GM12878 (cell line): ENCODE measurements at regions of chr5 and their contacts with region 1.

Region 1: GRCh38 chr5:148730943-148731861 is 76.9 kb upstream of the HTR4 start:
- DNase-seq: peak; percentile 43
- ATAC-seq: peak; percentile 92
- H3K4me3 ChIP-seq: peak overlapping the region; percentile 47; the same call in 1 of the 2 replicates
- H3K27ac ChIP-seq: no peak overlapping the region
- H3K4me1 ChIP-seq: peaks cover 3% of the 10 kb centered on the region; the same call in 1 of the 2 replicates
- H3K27me3 ChIP-seq: no peaks in the 10 kb centered on the region; a peak in 1 of 4 replicates
- CTCF ChIP-seq: peak; percentile 83 to 99 (median 98); a peak in 5 of 6 replicates
- EP300 ChIP-seq: no peak
- POLR2A ChIP-seq: no peak
- RAD21 ChIP-seq: peak; percentile 83

Region 2: DNA sequence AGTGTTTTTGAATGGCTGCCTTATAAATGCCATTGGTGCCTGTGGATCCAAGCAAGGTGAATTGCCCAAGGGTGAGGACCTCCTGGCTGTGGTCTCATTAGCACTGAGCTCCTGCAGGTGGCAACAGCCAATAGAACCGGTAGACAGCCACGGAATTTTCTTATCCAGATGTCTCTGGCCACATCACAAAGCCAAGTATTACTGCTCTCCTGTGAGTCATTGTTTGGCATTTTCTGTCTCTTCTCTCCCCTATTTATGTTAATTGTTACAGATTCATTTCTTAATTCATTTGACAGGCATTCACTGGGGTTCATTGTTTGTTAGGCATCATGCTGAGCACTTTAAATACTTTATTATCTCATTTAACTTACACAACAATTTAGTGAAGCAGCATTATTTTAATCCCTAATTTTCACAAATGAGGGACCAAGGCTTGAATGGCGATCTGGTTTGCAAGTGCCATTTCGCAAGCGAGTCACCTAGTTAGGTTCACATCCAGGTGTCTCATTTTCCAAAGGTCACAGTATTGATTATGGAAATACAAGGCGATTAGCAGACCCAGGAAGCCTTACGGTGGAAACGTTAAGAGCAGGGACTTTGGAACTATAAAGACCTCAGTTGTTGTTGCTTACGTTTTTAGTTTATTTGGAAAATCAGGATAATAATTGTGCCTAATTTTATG is 1163.1 kb before region 1 on chr5:
- CTCF ChIA-PET with region 1: no interaction called
- POLR2A ChIA-PET with region 1: no interaction called
- RAD21 ChIA-PET with region 1: no interaction called
- SMC1A ChIA-PET with region 1: no interaction called
- in situ Hi-C with region 1: no loop called
- intact Hi-C with region 1: no loop called
- DNase-seq: no peak
- ATAC-seq: no peak
- H3K4me3 ChIP-seq: no peak overlapping the region
- H3K27ac ChIP-seq: no peak overlapping the region
- H3K4me1 ChIP-seq: no peaks in the 10 kb centered on the region
- H3K27me3 ChIP-seq: peaks cover 0 to 3% of the 10 kb centered on the region in 2 experiments; a peak in 2 of 4 replicates
- CTCF ChIP-seq: no peak
- EP300 ChIP-seq: no peak
- POLR2A ChIP-seq: no peak
- RAD21 ChIP-seq: no peak

Region 3: GRCh38 chr5:147949711-147950573 is 781.3 kb before region 1 on chr5:
- CTCF ChIA-PET with region 1: interaction called, 6 read pairs
- POLR2A ChIA-PET with region 1: no interaction called
- RAD21 ChIA-PET with region 1: interaction called, 3 read pairs
- SMC1A ChIA-PET with region 1: interaction called, 6 read pairs
- in situ Hi-C with region 1: no loop called
- intact Hi-C with region 1: loop called (anchors 1 kb)
- DNase-seq: no peak
- ATAC-seq: peak; percentile 77
- H3K4me3 ChIP-seq: no peak overlapping the region
- H3K27ac ChIP-seq: no peak overlapping the region
- H3K4me1 ChIP-seq: no peaks in the 10 kb centered on the region
- H3K27me3 ChIP-seq: no peaks in the 10 kb centered on the region
- CTCF ChIP-seq: peak; percentile 48 to 66 (median 48); a peak in 4 of 6 replicates
- EP300 ChIP-seq: no peak
- POLR2A ChIP-seq: no peak
- RAD21 ChIP-seq: peak; percentile 68

Region 4: GRCh38 chr5:148443998-148444397 is 287.2 kb before region 1 on chr5:
- CTCF ChIA-PET with region 1: interaction called, 137 read pairs
- POLR2A ChIA-PET with region 1: no interaction called
- RAD21 ChIA-PET with region 1: interaction called, 55 read pairs
- SMC1A ChIA-PET with region 1: interaction called, 50 read pairs
- in situ Hi-C with region 1: loop called (anchors 5 kb)
- intact Hi-C with region 1: loop called (anchors 1 kb)
- DNase-seq: peak; percentile 3
- ATAC-seq: peak; percentile 96
- H3K4me3 ChIP-seq: no peak overlapping the region
- H3K27ac ChIP-seq: no peak overlapping the region
- H3K4me1 ChIP-seq: no peaks in the 10 kb centered on the region
- H3K27me3 ChIP-seq: no peaks in the 10 kb centered on the region
- CTCF ChIP-seq: peak; percentile 63 to 73 (median 69)
- EP300 ChIP-seq: no peak
- POLR2A ChIP-seq: no peak
- RAD21 ChIP-seq: peak; percentile 78

Region 5: DNA sequence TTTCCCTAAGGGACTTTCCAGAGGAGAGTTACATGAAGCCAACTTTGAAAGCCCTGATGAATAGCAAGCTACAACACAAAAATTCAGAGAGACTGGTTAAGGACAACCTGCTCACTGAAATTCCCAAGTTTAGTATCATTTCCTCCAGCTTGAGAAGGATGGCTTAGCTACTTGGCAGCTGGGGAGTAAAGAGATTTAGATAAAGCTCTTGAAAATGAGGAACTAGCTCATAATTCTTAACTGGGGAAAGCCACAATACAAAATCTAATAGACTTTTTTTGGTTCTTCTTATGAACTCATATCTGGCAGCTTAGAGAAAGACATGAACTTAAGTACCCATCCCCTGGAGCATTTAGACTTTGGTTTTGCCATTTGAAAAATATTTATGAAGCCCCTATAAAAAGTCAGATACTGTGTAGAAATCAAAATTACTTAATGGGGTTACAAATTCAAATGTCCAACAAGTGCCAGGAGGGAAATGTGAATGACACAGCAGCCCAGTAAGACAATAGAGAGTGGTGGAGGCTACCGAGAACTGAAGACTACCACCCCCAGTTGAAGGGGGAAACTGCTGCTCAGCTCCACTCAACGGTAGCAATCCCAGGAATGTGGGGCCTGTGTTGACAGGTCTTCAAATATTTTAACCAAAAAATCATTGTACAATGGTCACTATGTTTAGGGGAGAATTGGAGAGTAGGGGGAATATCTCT is 15.8 kb after region 1 on chr5:
- CTCF ChIA-PET with region 1: interaction called, 152 read pairs
- POLR2A ChIA-PET with region 1: no interaction called
- RAD21 ChIA-PET with region 1: interaction called, 12 read pairs
- SMC1A ChIA-PET with region 1: interaction called, 33 read pairs
- in situ Hi-C with region 1: no loop called
- intact Hi-C with region 1: no loop called
- DNase-seq: no peak
- ATAC-seq: peak; percentile 90
- H3K4me3 ChIP-seq: no peak overlapping the region
- H3K27ac ChIP-seq: no peak overlapping the region
- H3K4me1 ChIP-seq: peaks cover 9% of the 10 kb centered on the region
- H3K27me3 ChIP-seq: no peaks in the 10 kb centered on the region
- CTCF ChIP-seq: no peak
- EP300 ChIP-seq: no peak
- POLR2A ChIP-seq: no peak
- RAD21 ChIP-seq: no peak

Region 6: GRCh38 chr5:148831590-148832565 is 100.7 kb after region 1 on chr5:
- CTCF ChIA-PET with region 1: interaction called, 25 read pairs
- POLR2A ChIA-PET with region 1: no interaction called
- RAD21 ChIA-PET with region 1: interaction called, 3 read pairs
- SMC1A ChIA-PET with region 1: interaction called, 4 read pairs
- in situ Hi-C with region 1: no loop called
- intact Hi-C with region 1: no loop called
- DNase-seq: peak; percentile 59
- ATAC-seq: peak; percentile 92
- H3K4me3 ChIP-seq: 0 out of 2 replicates have a peak overlapping the region, but pooled peaks have one; percentile 28
- H3K27ac ChIP-seq: peak overlapping the region; percentile 40
- H3K4me1 ChIP-seq: peaks cover 31% of the 10 kb centered on the region
- H3K27me3 ChIP-seq: no peaks in the 10 kb centered on the region; a peak in 1 of 4 replicates
- CTCF ChIP-seq: no peak
- EP300 ChIP-seq: peak in 1 of 2 experiments; percentile 76; a peak in 2 of 4 replicates
- POLR2A ChIP-seq: no peak
- RAD21 ChIP-seq: no peak

Region 7: DNA sequence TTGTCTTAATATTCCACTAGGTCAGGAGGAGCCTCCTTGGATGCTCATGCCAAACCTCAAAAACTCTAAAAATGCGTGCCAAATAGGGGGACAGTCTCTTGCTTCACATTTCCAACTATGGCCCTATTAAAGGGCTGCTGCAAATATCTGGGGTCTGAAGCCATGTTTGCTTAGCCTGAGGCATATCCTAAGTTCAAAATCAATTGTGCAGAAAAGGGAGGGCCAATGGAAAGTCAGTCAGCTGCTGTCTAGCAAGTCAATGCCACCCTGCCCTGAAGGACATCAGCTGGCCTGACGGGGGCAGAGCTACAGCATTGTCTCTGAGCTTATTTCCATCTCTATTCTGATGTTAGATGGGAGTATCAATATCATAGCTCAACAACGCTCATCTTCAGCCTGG is 238.1 kb after region 1 on chr5:
- CTCF ChIA-PET with region 1: interaction called, 14 read pairs
- POLR2A ChIA-PET with region 1: no interaction called
- RAD21 ChIA-PET with region 1: interaction called, 4 read pairs
- SMC1A ChIA-PET with region 1: interaction called, 7 read pairs
- in situ Hi-C with region 1: no loop called
- intact Hi-C with region 1: no loop called
- DNase-seq: no peak
- ATAC-seq: no peak
- H3K4me3 ChIP-seq: no peak overlapping the region
- H3K27ac ChIP-seq: no peak overlapping the region
- H3K4me1 ChIP-seq: no peaks in the 10 kb centered on the region
- H3K27me3 ChIP-seq: peaks cover 0 to 2% of the 10 kb centered on the region in 2 experiments; a peak in 1 of 4 replicates
- CTCF ChIP-seq: no peak
- EP300 ChIP-seq: no peak
- POLR2A ChIP-seq: no peak
- RAD21 ChIP-seq: no peak

Region 8: GRCh38 chr5:149035372-149035790 is 304.2 kb after region 1 on chr5:
- CTCF ChIA-PET with region 1: interaction called, 335 read pairs
- POLR2A ChIA-PET with region 1: interaction called, 3 read pairs
- RAD21 ChIA-PET with region 1: interaction called, 91 read pairs
- SMC1A ChIA-PET with region 1: interaction called, 101 read pairs
- in situ Hi-C with region 1: loop called (anchors 5 kb)
- intact Hi-C with region 1: loop called (anchors 1 kb)
- DNase-seq: no peak
- ATAC-seq: peak; percentile 98
- H3K4me3 ChIP-seq: no peak overlapping the region
- H3K27ac ChIP-seq: no peak overlapping the region
- H3K4me1 ChIP-seq: no peaks in the 10 kb centered on the region
- H3K27me3 ChIP-seq: no peaks in the 10 kb centered on the region
- CTCF ChIP-seq: peak; percentile 82 to 91 (median 88)
- EP300 ChIP-seq: no peak
- POLR2A ChIP-seq: no peak
- RAD21 ChIP-seq: peak; percentile 87